Activated B cell treated with CpG ODN at 0.5 μM for 24 hours (primary cell): ENCODE measurements at regions of chr6 and their contacts with region 1.

Region 1: GRCh38 chr6:27687154-27688013 is 214.5 kb upstream of the ZNF184 start:
- DNase-seq: peak; percentile 63
- ATAC-seq: peak; percentile 73
- H3K4me3 Mint-ChIP-seq: peak overlapping the region; percentile 93
- H3K27ac Mint-ChIP-seq: peak overlapping the region; percentile 90
- H3K4me1 Mint-ChIP-seq: peaks cover 16% of the 10 kb centered on the region
- H3K27me3 Mint-ChIP-seq: peaks cover 4% of the 10 kb centered on the region
- CTCF ChIP-seq: no peak

Region 2: DNA sequence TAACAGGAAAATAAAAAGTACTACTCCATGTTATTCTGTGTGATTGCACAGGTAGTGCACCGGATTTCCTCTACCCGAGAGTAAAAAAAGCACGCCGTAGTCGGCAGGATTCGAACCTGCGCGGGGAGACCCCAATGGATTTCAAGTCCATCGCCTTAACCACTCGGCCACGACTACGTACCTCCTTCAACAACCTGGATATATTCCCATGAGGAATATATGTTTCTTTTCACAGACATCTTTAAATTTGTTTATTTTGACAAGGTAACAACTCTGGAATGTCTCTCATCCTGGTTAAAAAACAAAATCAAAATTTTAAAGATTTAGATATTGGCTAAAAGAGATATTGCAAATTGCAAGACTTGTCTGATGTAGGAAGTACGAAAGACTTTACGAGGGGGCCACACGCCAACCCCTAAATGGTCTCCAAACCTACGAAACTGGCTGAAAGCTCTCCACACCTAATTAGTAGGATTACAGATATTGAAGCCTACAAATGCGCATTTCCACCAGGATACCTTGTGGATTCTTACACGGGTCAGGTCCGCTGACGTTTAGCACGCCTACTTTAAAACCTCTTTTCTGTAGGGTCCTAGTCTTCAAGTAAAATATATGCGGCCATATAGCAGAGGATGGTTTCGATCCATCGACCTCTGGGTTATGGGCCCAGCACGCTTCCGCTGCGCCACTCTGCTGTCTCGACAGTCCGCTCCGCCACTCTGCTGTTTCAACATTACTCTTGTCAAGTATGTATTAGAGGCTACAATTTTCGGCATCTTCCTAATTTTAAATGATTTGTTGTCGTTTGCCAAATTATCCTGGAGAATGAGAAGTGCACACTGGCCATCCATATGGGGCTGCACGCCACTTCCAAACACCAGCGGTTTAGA is 1374.6 kb before region 1 on chr6:
- CTCF ChIA-PET with region 1: no interaction called
- POLR2A ChIA-PET with region 1: no interaction called
- intact Hi-C with region 1: loop called (anchors 5 kb)
- DNase-seq: peak; percentile 63
- ATAC-seq: peak; percentile 79
- H3K4me3 Mint-ChIP-seq: peak overlapping the region; percentile 90
- H3K27ac Mint-ChIP-seq: peak overlapping the region; percentile 95
- H3K4me1 Mint-ChIP-seq: peaks cover 28% of the 10 kb centered on the region
- H3K27me3 Mint-ChIP-seq: peaks cover 5% of the 10 kb centered on the region
- CTCF ChIP-seq: no peak

Region 3: GRCh38 chr6:27312146-27312949 is 375.0 kb before region 1 on chr6 and contains the start of gene POM121L2:
- CTCF ChIA-PET with region 1: no interaction called
- POLR2A ChIA-PET with region 1: no interaction called
- intact Hi-C with region 1: loop called (anchors 10 kb)
- DNase-seq: peak; percentile 53
- ATAC-seq: peak; percentile 71
- H3K4me3 Mint-ChIP-seq: peak within 1 kb of the TSS; percentile 82
- H3K27ac Mint-ChIP-seq: no peak within 1 kb of the TSS
- H3K4me1 Mint-ChIP-seq: peaks cover 12% of the 10 kb centered on the region
- H3K27me3 Mint-ChIP-seq: peaks cover 66% of the 10 kb centered on the region
- CTCF ChIP-seq: no peak
- total RNA-seq, gene POM121L2: not detected in 2 replicates

Region 4: DNA sequence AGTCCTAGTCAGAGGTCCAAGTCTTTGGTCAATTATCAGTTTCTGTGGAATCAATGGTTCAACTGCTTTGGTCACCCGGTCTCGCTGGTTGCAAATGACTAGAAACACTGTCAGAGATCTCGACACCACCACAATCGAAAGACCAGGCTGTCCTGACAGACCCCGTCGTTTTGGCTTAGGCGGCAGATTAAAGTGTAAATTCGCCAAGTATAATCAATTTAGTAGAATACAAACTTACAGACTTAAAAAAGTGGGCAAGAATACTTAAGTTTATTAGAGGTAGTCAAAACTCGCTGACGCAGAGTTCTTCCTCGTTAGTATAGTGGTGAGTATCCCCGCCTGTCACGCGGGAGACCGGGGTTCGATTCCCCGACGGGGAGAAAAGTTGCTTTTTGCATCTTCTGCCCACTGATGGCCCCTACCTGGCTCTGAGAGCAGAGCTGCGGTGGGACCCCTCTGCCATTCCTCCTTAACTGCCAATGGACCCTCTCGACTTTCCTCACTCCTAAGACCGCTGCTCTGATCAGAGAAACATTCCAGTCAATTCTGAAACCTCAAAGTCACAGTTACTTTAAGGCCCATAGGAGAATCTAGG is 183.9 kb before region 1 on chr6:
- CTCF ChIA-PET with region 1: no interaction called
- POLR2A ChIA-PET with region 1: no interaction called
- intact Hi-C with region 1: loop called (anchors 5 kb)
- DNase-seq: peak; percentile 61
- ATAC-seq: peak; percentile 39
- H3K4me3 Mint-ChIP-seq: peak overlapping the region; percentile 87
- H3K27ac Mint-ChIP-seq: peak overlapping the region; percentile 77
- H3K4me1 Mint-ChIP-seq: peaks cover 35% of the 10 kb centered on the region
- H3K27me3 Mint-ChIP-seq: peaks cover 12% of the 10 kb centered on the region
- CTCF ChIP-seq: no peak

Region 5: GRCh38 chr6:27565821-27566766 is 121.3 kb before region 1 on chr6:
- CTCF ChIA-PET with region 1: no interaction called
- POLR2A ChIA-PET with region 1: no interaction called
- intact Hi-C with region 1: no loop called
- DNase-seq: no peak
- ATAC-seq: no peak
- H3K4me3 Mint-ChIP-seq: no peak overlapping the region
- H3K27ac Mint-ChIP-seq: no peak overlapping the region
- H3K4me1 Mint-ChIP-seq: peaks cover 4% of the 10 kb centered on the region
- H3K27me3 Mint-ChIP-seq: peaks cover 70% of the 10 kb centered on the region
- CTCF ChIP-seq: no peak

Region 6: GRCh38 chr6:27601668-27602254 is 85.6 kb before region 1 on chr6:
- CTCF ChIA-PET with region 1: no interaction called
- POLR2A ChIA-PET with region 1: interaction called, 11 read pairs
- intact Hi-C with region 1: no loop called
- DNase-seq: no peak
- ATAC-seq: no peak
- H3K4me3 Mint-ChIP-seq: no peak overlapping the region
- H3K27ac Mint-ChIP-seq: no peak overlapping the region
- H3K4me1 Mint-ChIP-seq: peaks cover 5% of the 10 kb centered on the region
- H3K27me3 Mint-ChIP-seq: peaks cover 51% of the 10 kb centered on the region
- CTCF ChIP-seq: no peak

Region 7: DNA sequence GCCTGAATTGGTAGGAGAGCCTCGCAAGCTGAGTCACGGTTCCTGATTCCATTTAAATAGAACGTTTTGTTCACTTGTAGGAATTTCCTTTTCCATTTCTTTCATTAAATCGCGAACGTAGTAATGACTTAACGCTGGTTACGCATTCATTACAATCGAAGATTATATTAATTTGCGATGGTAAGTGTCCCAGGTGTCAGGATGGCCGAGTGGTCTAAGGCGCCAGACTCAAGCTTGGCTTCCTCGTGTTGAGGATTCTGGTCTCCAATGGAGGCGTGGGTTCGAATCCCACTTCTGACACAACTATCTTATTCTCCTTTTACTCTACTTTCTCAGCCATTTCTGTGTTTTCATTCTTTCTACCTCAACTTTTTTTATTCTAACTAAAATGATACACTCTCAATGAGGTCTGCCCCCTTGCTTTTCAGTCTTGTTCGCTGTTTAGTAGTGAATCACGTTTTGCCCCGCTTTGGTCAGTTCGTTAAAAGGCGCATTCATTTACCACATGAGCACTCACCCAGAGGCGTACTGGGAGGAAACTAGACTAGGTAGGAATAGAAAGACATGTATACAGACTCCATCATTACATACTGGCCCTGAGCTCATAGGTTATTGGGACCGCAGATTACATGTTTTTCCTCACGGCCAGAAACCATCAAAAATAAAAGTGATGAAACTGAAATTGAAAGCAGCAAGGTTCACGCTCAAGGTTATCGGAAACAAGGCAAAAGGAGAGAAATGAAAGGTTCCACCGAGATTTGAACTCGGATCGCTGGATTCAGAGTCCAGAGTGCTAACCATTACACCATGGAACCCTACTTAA is 1253.7 kb after region 1 on chr6:
- CTCF ChIA-PET with region 1: no interaction called
- POLR2A ChIA-PET with region 1: no interaction called
- intact Hi-C with region 1: loop called (anchors 10 kb)
- DNase-seq: peak; percentile 36
- ATAC-seq: peak; percentile 66
- H3K4me3 Mint-ChIP-seq: peak overlapping the region; percentile 95
- H3K27ac Mint-ChIP-seq: peak overlapping the region; percentile 88
- H3K4me1 Mint-ChIP-seq: peaks cover 47% of the 10 kb centered on the region
- H3K27me3 Mint-ChIP-seq: peaks cover 3% of the 10 kb centered on the region
- CTCF ChIP-seq: no peak